CD4-positive, alpha-beta memory T cell (primary cell): ENCODE measurements at regions of chr10 and their contacts with region 1.

Region 1: DNA sequence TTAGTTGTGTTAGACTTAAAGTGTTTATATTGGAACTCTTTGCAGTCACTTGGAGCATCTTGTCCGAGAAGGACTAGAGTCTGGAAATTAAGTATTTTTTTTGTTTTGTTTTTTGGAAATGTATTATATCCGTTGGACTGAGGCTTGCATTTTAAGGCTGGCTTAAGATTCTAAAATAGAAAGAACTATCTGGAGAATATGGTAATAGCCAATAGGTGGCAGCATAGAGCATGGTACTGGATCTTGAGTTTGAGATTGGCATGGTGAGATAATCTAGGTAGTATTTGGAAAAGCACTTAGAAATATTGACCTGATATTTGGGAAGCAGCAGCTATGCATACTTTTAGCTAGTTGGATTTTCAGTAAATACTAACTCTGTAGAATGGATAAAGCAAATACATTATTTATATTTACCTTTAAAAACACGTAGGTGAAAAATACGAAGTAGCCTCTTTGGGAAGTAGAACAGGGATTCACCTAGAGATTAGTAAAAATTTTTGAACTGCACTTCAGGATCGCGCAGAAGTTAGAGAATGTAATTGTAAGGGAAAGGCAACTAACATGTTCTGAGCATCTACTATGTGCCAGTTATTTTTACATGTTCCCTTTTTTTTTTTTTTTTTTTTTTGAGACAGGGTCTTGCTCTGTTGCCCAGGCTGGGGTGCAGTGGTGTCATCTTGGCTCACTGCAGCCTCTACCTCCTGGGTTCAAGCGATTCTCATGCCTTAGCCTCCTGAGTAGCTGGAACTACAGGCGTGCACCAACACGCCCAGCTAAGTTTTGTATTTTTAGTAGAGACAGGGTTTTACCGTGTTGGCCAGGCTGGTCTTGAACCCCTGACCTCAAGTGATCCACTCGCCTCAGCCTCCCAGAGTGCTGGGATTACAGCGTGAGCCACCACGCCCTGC is 78.6 kb downstream of the LCOR start:
- DNase-seq: peak in 4 of 5 donors; percentile 21 to 33 (median 30)
- H3K4me3 ChIP-seq: no peak overlapping the region
- H3K4me3 Mint-ChIP-seq: no peak overlapping the region
- H3K27ac ChIP-seq: no peak overlapping the region
- H3K27ac Mint-ChIP-seq: peak overlapping the region in 2 of 7 donors; percentile 13 to 19
- H3K4me1 ChIP-seq: peaks cover 5% of the 10 kb centered on the region
- H3K4me1 Mint-ChIP-seq: peaks cover 15 to 36% (median 26%) of the 10 kb centered on the region in 4 donors
- H3K27me3 ChIP-seq: no peaks in the 10 kb centered on the region
- H3K27me3 Mint-ChIP-seq: no peaks in the 10 kb centered on the region

Region 2: GRCh38 chr10:96896884-96897589 is 13.7 kb before region 1 on chr10:
- CTCF ChIA-PET with region 1: interaction called, 17 read pairs
- POLR2A ChIA-PET with region 1: interaction called, 3 read pairs
- intact Hi-C with region 1: no loop called
- DNase-seq: no peak
- H3K4me3 ChIP-seq: no peak overlapping the region
- H3K4me3 Mint-ChIP-seq: peak overlapping the region in 4 of 8 donors; percentile 8 to 53 (median 15)
- H3K27ac ChIP-seq: no peak overlapping the region
- H3K27ac Mint-ChIP-seq: peak overlapping the region in 2 of 7 donors; percentile 8 to 37
- H3K4me1 ChIP-seq: peaks cover 19% of the 10 kb centered on the region
- H3K4me1 Mint-ChIP-seq: peaks cover 35 to 61% (median 47%) of the 10 kb centered on the region in 4 donors
- H3K27me3 ChIP-seq: no peaks in the 10 kb centered on the region
- H3K27me3 Mint-ChIP-seq: no peaks in the 10 kb centered on the region

Region 3: DNA sequence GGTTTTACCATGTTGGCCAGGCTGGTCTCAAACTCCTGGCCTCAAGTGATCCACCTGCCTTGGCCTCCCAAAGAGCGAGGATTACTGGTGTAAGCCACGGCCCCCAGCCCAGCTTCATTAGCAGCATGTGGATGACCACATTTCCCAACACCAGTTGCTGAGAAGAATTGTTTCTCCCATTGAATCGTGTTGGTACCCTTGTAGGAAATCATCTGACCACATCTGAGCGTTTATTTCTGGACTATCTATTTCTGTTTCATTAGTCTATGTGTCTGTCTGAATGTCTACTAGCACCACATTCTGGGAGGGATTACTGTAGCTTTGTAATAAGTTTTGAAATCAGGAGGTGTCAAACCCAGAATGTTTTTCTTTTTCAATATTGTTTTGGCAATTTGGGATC is 10.9 kb after region 1 on chr10:
- CTCF ChIA-PET with region 1: interaction called, 10 read pairs
- POLR2A ChIA-PET with region 1: no interaction called
- intact Hi-C with region 1: no loop called
- DNase-seq: no peak
- H3K4me3 ChIP-seq: no peak overlapping the region
- H3K4me3 Mint-ChIP-seq: no peak overlapping the region
- H3K27ac ChIP-seq: no peak overlapping the region
- H3K27ac Mint-ChIP-seq: no peak overlapping the region
- H3K4me1 ChIP-seq: no peaks in the 10 kb centered on the region
- H3K4me1 Mint-ChIP-seq: peaks cover 22 to 32% (median 30%) of the 10 kb centered on the region in 4 donors
- H3K27me3 ChIP-seq: no peaks in the 10 kb centered on the region
- H3K27me3 Mint-ChIP-seq: no peaks in the 10 kb centered on the region